G401 (cell line): ENCODE measurements at regions of chr11 and their contacts with region 1.

Region 1: DNA sequence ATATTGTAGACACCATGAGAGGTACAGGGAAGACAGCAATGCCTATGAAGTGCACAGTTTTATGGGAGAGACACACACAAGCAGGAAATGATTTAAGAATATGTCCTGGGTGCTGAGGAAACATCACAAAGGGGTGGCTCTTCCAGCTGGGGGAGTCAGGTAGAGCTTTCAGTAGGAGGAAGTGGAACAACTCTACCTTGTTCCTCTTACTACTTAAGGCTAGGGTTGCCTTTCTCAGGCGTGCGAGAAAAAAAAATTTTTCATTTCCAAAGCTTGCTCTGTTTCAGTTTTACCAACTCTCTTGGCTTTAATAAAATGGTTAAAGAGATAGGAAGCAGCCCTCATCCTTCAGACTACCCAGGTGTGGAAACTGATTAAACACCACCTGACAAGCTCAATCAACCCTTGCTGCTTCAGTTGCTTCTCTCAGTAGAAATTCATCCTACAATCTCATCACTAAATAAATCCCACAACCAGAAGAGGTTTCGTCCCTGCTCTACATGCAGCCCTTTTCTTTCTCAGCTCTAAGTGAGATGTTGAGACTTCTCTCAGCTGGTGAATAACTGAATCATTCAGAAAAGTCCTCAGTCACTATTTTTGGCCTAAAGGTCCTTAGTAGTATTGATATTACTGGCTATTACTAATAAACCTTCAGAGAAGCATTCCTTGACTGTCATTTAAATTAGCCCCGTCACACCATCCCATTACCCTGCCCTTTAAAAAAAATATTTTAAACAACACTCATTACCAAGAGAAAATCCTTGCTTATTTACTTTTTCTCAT is 5.9 kb downstream of the ABTB2 start:
- DNase-seq: no peak

Region 2: DNA sequence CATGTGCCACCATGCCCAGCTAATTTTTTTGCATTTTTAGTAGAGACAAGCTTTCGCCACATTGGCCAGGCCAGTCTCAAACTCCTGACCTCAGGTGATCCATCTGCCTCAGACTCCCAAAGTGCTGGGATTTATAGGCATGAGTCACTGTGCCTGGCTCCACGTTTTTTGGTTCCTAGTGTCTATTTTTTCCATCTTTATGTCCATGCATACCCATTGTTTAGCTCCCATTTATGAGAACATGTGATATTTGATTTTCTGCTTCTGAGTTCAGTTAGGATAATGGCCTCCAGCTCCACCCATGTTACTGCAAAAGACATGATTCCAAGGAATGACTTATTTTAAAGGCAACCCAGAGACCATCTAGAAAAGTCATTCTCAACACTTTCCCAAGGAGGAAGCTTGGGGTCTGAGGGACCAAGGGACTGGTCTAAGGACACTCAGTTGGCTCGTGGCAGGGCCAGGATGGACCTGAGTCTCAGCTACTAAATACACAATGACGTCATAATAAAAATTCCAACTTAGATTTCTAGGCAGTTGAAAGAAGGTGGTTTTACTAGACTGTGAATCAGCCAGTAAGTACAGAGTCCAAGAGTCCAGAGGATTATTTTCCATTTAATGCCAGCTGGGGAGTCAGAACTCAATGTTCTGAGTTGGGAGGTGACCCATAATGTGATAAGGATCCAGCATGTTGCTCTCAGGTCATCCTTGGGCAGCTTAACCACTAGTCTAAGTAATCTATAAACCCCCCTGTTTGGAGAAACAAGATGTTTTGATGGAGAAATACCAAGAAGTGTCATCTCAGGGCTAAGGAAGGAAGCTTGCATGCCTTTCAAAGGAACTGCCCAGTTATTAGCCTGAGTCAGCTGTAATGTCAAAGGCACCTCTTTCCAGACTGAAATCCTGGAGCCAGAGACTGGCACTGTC is 33.5 kb before region 1 on chr11:
- in situ Hi-C with region 1: loop called (anchors 5 kb)
- DNase-seq: no peak